ENCODE measurements at regions of chr13 and their contacts with region 1.

Region 1: DNA sequence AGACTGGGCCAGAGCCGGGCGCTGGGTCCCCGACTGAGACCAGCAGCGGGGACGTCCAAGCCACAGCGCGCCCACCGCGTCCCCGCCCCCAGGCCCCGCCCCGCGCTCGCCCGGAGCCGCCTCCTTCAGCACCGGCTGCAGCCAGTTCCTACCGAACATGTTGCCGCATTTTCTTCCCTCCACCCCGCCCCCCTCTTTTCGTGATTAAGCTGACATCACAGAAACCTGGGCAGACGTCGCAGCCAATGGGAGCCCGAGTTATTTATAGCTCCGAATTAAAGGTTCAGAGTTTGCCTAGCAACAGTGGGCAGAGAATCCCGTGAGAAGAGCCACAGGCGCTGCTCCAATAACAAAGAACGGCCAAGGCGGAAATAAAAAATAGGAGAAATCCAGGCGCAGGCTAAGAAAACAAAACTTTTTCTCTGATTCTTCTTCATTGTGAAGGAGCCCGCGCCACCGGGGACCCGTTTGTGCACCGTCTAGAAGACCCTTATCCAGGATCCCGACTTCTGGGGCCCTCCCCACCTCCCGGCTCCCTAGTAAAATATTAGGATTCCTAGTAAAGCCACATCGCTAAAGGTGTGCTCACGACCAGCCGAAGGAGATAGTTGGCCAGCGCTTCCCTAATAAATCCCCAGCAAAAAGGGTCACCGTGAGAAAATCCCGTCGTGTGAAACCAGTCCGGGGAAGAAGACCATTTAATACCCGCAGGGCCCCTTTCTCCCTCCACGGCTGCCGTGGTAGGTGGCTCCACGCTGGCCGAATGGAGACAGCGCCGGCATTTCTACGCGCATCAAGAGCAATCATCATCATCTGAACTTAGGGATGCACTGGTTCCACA is 61.7 kb downstream of the SERP2 start:
- DNase-seq: peak; percentile 95 to 99
- H3K4me3 ChIP-seq: peak overlapping the region; percentile 87 to 96
- H3K27ac ChIP-seq: peak overlapping the region; percentile 96 to 100
- H3K4me1 ChIP-seq: peaks cover 0 to 5% of the 10 kb centered on the region in 2 donors
- H3K27me3 ChIP-seq: no peaks in the 10 kb centered on the region
- CTCF ChIP-seq: no peak
- POLR2A ChIP-seq: peak; percentile 77 to 96

Region 2: DNA sequence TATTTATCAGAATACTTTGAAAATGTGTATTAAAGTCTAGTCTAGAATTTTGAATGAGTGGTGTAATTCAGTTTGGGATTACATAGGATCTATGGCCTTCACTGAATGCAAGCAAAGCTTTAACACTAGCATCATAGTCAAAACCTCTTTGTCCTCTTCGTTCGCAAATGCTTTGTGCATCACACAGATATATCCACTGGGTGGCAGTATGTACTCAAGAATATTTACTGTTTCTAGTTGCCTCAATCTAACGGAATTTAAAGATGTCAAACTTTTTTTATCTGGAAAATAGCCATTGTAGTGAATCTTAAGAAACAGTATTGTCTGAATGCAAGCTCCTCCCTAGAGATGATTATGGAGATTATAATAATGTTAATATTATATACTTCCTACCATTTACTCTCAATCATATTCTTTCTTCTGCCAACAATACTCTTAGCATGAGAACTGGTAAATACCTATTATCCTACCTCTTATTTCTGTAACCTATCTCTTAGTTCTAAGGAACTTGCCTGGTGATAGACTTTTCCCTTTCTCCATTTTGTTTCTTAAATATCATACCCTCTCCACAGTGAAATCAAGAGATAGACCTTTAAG is 529.8 kb before region 1 on chr13:
- intact Hi-C with region 1: loop called (anchors 10 kb)
- DNase-seq: peak; percentile 18 to 46
- H3K4me3 ChIP-seq: no peak overlapping the region
- H3K27ac ChIP-seq: no peak overlapping the region
- H3K4me1 ChIP-seq: no peaks in the 10 kb centered on the region
- H3K27me3 ChIP-seq: no peaks in the 10 kb centered on the region
- CTCF ChIP-seq: peak; percentile 66 to 94 (median 82)
- POLR2A ChIP-seq: no peak

Region 3: GRCh38 chr13:44050450-44051063 is 384.8 kb before region 1 on chr13:
- intact Hi-C with region 1: loop called (anchors 10 kb)
- DNase-seq: no peak
- H3K4me3 ChIP-seq: no peak overlapping the region
- H3K27ac ChIP-seq: peak overlapping the region in 1 of 2 donors; percentile 8
- H3K4me1 ChIP-seq: peaks cover 0 to 13% of the 10 kb centered on the region in 2 donors
- H3K27me3 ChIP-seq: no peaks in the 10 kb centered on the region
- CTCF ChIP-seq: peak; percentile 70 to 82 (median 76)
- POLR2A ChIP-seq: no peak

Region 4: DNA sequence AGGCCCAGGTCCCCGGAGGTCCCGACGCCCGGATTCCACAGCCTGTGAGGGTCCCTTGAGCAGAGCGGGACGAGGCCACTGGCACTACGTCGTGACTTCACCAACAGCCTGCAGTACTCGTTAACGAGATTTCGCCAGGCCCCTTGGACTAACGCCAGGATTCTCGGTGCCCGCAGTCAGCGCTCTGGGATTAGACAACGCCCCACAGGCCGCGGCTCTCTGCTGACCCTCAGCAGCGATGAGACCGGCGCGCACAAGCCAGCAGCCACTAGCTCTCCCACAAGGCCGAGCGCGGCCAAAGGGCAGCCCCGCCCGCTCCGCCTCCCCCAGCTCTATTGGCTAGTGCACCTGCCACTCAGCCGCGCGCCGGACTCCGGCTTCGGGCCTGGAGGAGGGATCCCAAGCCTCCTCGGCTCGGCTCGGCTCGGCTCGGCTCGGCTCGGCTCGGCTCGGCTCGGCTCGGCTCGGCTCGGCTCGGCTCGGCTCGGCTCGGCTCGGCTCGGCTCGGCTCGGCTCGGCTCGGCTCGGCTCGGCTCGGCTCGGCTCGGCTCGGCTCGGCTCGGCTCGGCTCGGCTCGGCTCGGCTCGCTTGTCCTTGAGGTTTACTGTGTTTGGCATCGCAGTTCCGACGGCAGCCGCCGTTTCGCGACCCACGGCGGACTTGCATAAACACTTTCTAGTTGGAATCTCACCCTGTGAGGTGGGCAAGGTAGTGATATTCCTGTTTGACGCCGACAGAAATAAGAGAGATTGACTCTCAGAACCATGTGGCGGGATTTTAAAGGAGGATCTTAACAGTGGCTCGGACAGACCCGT is 293.4 kb before region 1 on chr13:
- intact Hi-C with region 1: loop called (anchors 5 kb)
- DNase-seq: peak; percentile 96 to 99
- H3K4me3 ChIP-seq: peak overlapping the region; percentile 60 to 64
- H3K27ac ChIP-seq: peak overlapping the region; percentile 95 to 99
- H3K4me1 ChIP-seq: no peaks in the 10 kb centered on the region
- H3K27me3 ChIP-seq: no peaks in the 10 kb centered on the region
- CTCF ChIP-seq: peak in 2 of 4 experiments; percentile 23 to 52
- POLR2A ChIP-seq: peak; percentile 96 to 98

Measured in uterus (tissue), 4 donors.